ENCODE measurements at regions of chr18 and their contacts with region 1.

Region 1: GRCh38 chr18:79400091-79400590 is 4.4 kb downstream of the NFATC1 start:
- DNase-seq: peak; percentile 79
- H3K4me3 Mint-ChIP-seq: peak overlapping the region; percentile 52
- H3K27ac Mint-ChIP-seq: no peak overlapping the region
- H3K4me1 Mint-ChIP-seq: peaks cover 48% of the 10 kb centered on the region
- H3K27me3 Mint-ChIP-seq: no peaks in the 10 kb centered on the region

Region 2: DNA sequence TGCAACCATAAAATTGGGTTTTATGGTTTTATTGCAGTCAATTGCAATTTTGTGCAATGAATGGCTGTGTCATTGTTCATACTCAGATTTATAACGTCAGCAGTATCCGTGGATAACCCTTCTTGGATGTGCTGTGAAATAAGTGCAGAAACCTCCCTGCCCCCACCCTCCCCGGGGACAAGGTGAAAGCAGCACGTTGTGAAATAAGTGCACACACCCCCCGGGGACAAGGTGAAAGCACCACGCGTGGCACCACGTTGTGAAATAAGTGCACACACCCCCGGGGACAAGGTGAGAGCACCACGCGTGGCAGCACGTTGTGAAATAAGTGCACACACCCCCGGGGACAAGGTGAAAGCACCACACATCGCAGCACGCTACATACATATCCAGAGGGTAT is 98.0 kb before region 1 on chr18:
- CTCF ChIA-PET with region 1: no interaction called
- POLR2A ChIA-PET with region 1: no interaction called
- DNase-seq: no peak
- H3K4me3 Mint-ChIP-seq: no peak overlapping the region
- H3K27ac Mint-ChIP-seq: no peak overlapping the region
- H3K4me1 Mint-ChIP-seq: no peaks in the 10 kb centered on the region
- H3K27me3 Mint-ChIP-seq: no peaks in the 10 kb centered on the region

Region 3: DNA sequence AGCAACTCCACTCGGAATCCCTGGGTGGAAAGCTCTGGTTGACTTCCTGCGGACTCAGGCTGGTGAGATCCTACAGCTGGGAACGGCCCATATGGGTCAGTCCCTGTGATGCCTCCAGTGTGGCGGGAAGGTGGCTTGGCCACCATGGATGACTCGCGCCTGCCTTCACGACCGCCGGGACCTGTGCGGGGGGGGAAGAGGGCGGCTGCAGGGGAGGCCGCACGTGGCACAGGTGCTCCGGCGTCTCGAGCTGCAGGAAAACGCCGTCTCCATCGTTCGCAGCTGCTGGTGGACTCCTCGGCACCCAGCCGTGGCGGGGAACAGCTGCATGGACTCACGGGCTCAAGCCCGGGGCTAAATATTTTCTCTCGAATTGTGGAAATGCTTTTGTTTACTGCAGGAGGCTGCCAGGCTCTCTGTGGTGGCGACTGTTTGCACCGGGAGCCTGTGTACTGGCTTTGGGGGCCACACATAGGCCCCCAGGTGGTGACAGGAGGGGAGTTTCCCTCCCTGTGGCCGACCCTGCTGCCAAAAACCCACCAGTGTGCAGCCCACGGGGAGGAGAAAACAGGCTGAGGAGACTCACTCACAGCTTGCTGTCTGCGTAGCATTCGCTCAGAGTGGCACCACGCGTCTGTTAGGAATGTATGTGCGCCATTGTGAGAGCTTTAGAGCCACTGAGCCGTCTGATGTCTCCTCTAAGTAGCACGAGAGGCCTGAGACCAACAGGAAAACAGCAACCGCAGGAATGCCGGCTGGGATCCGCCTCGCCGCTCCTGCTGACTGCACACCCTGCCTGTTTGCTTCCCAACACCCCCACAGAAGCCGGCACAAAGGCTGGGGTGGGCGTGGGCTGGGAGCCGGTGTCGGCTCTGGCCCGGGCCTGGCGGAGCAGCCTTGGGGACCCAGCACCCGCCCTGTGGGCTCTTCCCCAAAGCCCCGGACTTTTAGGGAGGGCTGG is 84.8 kb after region 1 on chr18:
- CTCF ChIA-PET with region 1: no interaction called
- POLR2A ChIA-PET with region 1: no interaction called
- DNase-seq: no peak
- H3K4me3 Mint-ChIP-seq: no peak overlapping the region
- H3K27ac Mint-ChIP-seq: no peak overlapping the region
- H3K4me1 Mint-ChIP-seq: no peaks in the 10 kb centered on the region
- H3K27me3 Mint-ChIP-seq: no peaks in the 10 kb centered on the region

Region 4: GRCh38 chr18:79517341-79517740 is 117.2 kb after region 1 on chr18:
- CTCF ChIA-PET with region 1: no interaction called
- POLR2A ChIA-PET with region 1: interaction called, 40 read pairs
- DNase-seq: peak; percentile 64
- H3K4me3 Mint-ChIP-seq: peak overlapping the region; percentile 52
- H3K27ac Mint-ChIP-seq: peak overlapping the region; percentile 85
- H3K4me1 Mint-ChIP-seq: peaks cover 60% of the 10 kb centered on the region
- H3K27me3 Mint-ChIP-seq: no peaks in the 10 kb centered on the region

Region 5: DNA sequence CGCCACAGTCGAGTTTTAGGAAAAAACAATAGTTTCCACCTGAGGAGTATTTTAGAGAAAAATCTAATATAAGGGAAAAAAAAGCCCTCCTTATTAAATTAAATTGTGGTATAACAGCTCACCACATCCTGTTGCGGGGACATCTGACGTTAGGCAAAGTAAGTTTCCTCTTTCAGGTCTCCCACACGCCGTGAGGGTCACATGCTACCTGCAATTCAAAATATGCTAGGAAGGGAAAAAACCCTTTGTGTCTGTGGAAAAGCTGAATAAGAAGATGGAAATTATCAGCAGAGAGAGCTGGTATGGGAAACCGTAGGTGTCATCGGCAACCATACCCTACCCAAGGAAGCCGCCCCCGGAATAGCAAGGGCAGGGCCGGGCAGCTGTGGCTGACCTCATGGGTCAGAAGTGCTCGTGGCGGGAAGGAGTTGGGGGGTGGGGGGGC is 123.6 kb after region 1 on chr18:
- CTCF ChIA-PET with region 1: interaction called, 15 read pairs
- POLR2A ChIA-PET with region 1: interaction called, 40 read pairs
- DNase-seq: peak; percentile 80
- H3K4me3 Mint-ChIP-seq: peak overlapping the region; percentile 65
- H3K27ac Mint-ChIP-seq: peak overlapping the region; percentile 88
- H3K4me1 Mint-ChIP-seq: peaks cover 60% of the 10 kb centered on the region
- H3K27me3 Mint-ChIP-seq: no peaks in the 10 kb centered on the region